Posterior vena cava (tissue), 2 donors: ENCODE measurements at regions of chr7 and their contacts with region 1.

Region 1: GRCh38 chr7:123096434-123096833 is 100.9 kb upstream of the TAS2R16 start:
- DNase-seq: no peak

Region 2: DNA sequence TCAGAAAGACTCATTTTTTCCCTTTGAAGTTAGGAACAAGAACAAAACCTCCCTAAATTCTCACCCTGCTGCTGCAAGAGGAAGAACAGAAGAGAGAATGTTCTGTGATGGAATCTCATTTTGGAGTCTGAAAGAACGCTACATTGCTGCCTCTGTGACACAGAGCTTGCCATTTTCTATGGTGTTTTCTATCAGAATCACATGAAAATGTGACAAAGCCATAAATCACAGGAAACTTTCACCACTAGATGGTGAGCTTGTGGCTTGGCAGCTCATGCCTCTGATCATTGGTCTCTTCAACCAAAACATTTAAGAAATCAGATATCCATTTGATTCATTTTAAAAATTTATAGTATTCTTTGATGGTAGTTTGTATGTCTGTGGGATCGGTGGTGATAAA is 293.1 kb before region 1 on chr7:
- intact Hi-C with region 1: no loop called
- DNase-seq: no peak

Region 3: GRCh38 chr7:123070702-123071286 is 25.6 kb before region 1 on chr7:
- intact Hi-C with region 1: no loop called
- DNase-seq: no peak

Region 4: GRCh38 chr7:123148855-123149254 is 52.4 kb after region 1 on chr7:
- intact Hi-C with region 1: no loop called
- DNase-seq: no peak

Region 5: GRCh38 chr7:124330731-124331407 is 1234.4 kb after region 1 on chr7:
- intact Hi-C with region 1: loop called in 1 of 2 experiments (anchors 10 kb)
- DNase-seq: no peak